Activated naive CD4-positive, alpha-beta T cell treated with anti-CD3 and anti-CD28 coated beads for 36 hours (primary cell): ENCODE measurements at regions of chr6 and their contacts with region 1.

Region 1: GRCh38 chr6:118776607-118777549 is 117.1 kb upstream of the ASF1A start:
- DNase-seq: peak; percentile 85
- H3K4me3 Mint-ChIP-seq: no peak overlapping the region
- H3K27ac Mint-ChIP-seq: peak overlapping the region; percentile 47
- H3K4me1 Mint-ChIP-seq: peaks cover 23% of the 10 kb centered on the region
- H3K27me3 Mint-ChIP-seq: no peaks in the 10 kb centered on the region

Region 2: GRCh38 chr6:118485601-118486550 is 291.0 kb before region 1 on chr6:
- CTCF ChIA-PET with region 1: no interaction called
- intact Hi-C with region 1: loop called (anchors 10 kb)
- DNase-seq: peak; percentile 13
- H3K4me3 Mint-ChIP-seq: no peak overlapping the region
- H3K27ac Mint-ChIP-seq: no peak overlapping the region
- H3K4me1 Mint-ChIP-seq: peaks cover 27% of the 10 kb centered on the region
- H3K27me3 Mint-ChIP-seq: no peaks in the 10 kb centered on the region

Region 3: GRCh38 chr6:118618679-118619377 is 158.1 kb before region 1 on chr6:
- CTCF ChIA-PET with region 1: interaction called, 3 read pairs
- intact Hi-C with region 1: loop called (anchors 1 kb)
- DNase-seq: peak; percentile 81
- H3K4me3 Mint-ChIP-seq: no peak overlapping the region
- H3K27ac Mint-ChIP-seq: no peak overlapping the region
- H3K4me1 Mint-ChIP-seq: peaks cover 50% of the 10 kb centered on the region
- H3K27me3 Mint-ChIP-seq: no peaks in the 10 kb centered on the region

Region 4: GRCh38 chr6:118697554-118697953 is 79.3 kb before region 1 on chr6:
- CTCF ChIA-PET with region 1: no interaction called
- intact Hi-C with region 1: loop called (anchors 1 kb)
- DNase-seq: peak; percentile 41
- H3K4me3 Mint-ChIP-seq: no peak overlapping the region
- H3K27ac Mint-ChIP-seq: no peak overlapping the region
- H3K4me1 Mint-ChIP-seq: peaks cover 73% of the 10 kb centered on the region
- H3K27me3 Mint-ChIP-seq: no peaks in the 10 kb centered on the region

Region 5: DNA sequence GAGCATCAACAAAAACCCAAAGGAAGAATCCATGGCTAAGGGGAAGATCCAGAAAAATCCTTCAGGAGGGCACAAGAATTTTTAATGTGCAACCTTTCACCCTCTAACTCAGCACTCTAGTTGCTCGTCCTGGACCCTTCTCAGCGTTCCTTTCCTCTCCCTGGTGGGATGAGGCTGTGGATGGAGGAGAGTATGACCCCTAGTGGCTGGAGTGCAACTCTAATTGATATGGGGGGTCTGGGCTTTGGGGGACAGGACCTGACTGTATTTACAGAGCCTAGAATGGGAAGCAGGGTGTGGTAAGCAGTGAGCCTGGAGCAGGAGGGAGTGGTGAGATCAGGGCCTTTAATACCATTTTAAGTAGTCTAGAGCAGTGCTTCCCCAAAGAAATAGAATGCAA is 41.6 kb before region 1 on chr6:
- CTCF ChIA-PET with region 1: interaction called, 4 read pairs
- intact Hi-C with region 1: loop called (anchors 2 kb)
- DNase-seq: no peak
- H3K4me3 Mint-ChIP-seq: no peak overlapping the region
- H3K27ac Mint-ChIP-seq: no peak overlapping the region
- H3K4me1 Mint-ChIP-seq: peaks cover 33% of the 10 kb centered on the region
- H3K27me3 Mint-ChIP-seq: no peaks in the 10 kb centered on the region